Dendritic cell treated with granulocyte-macrophage colony-stimulating factor and Interleukin-4, amounts not matched to agents 40 ng/mL and 50 ng/mL, for 4 days (primary cell): ENCODE measurements at regions of chr1 and their contacts with region 1.

Region 1: DNA sequence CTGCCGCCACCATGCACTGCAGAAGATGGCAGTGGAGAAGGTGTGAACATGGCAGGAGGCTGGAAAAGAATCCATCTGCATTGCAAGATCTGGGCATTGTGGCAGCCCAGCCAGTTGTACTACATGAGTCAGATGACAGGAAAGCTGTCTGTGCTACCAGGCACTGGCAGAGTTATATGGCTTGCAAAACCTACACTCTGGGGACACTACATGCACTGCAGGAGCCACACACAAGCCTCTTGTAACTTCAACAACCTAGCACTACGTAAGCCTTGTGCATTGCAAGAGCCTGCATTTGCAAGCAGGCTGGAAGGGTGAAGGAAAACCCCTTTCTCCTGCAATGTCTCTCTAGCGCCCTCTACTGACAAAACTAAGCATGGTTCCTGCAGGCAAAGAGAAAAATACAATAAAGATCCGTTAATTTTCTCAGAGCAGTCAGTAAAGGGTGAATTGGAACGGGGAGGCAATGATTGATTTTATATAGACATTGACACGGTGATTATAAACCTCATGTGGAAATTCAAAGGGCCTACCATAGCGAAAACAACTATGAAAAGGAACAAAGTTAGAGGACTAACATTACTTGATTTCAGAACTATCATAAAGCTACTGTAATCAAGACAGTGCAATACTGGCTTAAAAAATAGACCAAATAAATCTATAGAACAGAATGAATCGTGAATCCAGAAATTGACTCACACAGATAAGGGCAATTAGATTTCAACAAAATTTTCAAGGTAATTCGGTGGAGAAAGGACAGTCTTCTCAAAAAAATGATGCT is 26.2 kb upstream of the DYNLT5 start:
- H3K4me3 Mint-ChIP-seq: no peak overlapping the region
- H3K27ac Mint-ChIP-seq: no peak overlapping the region
- H3K4me1 Mint-ChIP-seq: peaks cover 8% of the 10 kb centered on the region
- H3K27me3 Mint-ChIP-seq: no peaks in the 10 kb centered on the region

Region 2: DNA sequence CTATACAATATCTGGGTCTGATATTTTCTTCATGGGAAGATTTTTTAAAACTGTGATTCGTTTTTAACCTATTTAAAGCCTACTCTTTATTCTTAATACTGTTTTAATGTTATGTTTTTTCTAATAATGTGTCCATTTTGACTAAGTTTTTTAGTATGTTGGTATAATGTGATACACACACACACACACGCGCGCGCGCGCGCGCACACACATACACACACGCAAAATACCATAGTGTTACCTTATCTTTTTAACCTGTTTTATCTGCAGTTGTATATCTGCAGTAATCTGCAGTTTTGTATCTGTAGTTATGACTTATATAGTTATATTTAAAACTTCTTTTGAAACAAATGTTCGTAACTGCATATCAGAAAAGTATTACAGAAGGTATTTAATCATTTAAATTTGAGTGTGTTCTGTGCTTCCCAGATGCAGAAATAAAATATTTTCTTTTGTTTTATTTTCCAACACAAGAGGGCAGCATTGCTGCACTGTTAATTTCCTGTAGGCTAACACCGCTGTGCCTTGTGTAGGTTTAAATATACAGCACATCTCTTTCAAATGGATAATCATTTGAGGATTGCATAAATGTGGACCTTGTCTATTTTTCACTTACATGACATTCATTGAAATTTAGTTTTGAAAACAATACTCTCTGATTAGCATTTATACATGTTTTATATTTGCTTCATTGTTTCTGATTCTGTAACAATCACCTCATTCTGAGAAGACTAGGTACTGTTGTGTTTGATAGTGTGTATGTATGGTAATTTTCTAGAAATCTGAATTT is 767.3 kb before region 1 on chr1:
- intact Hi-C with region 1: loop called (anchors 5 kb)
- H3K4me3 Mint-ChIP-seq: no peak overlapping the region
- H3K27ac Mint-ChIP-seq: no peak overlapping the region
- H3K4me1 Mint-ChIP-seq: peaks cover 6% of the 10 kb centered on the region
- H3K27me3 Mint-ChIP-seq: no peaks in the 10 kb centered on the region

Region 3: DNA sequence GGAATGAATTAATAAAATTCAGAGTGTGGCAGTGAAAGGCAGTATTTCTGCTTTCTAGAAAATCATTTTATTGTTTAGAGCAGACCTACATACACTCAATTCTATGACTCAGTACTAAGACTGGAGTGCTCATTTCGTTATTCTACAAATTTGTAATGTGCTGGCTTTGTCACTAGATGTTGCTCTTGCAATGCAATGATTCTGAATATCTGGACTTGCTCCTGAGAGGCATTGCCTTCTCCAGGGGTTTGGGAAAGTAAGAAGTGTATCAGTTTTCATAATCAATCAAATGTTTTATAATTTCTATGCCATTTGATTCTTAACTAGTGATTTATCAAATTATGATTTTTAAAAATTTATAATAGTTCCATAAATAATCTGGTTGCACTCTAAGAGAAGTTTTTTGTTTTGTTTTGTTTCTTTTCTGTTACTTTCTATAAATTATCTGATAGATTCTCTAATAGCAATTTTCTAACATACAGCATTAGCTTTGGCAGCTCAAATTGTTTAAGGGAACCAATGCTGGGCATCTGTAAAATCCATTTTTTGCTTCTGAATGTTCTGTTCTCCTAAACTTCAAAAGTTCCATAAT is 472.6 kb before region 1 on chr1:
- intact Hi-C with region 1: loop called (anchors 10 kb)
- H3K4me3 Mint-ChIP-seq: no peak overlapping the region
- H3K27ac Mint-ChIP-seq: no peak overlapping the region
- H3K4me1 Mint-ChIP-seq: peaks cover 34% of the 10 kb centered on the region
- H3K27me3 Mint-ChIP-seq: no peaks in the 10 kb centered on the region